Activated CD4-positive, alpha-beta T cell treated with anti-CD3 and anti-CD28 coated beads, Interleukin-2, amount 10 ng/mL, durations not matched to agents 24 days and 14 days (primary cell): ENCODE measurements at regions of chr10 and their contacts with region 1.

Region 1: GRCh38 chr10:9024210-9024609 is 969.7 kb downstream of the GATA3 start:
- DNase-seq: no peak
- H3K4me3 Mint-ChIP-seq: no peak overlapping the region
- H3K27ac Mint-ChIP-seq: peak overlapping the region; percentile 85
- H3K4me1 Mint-ChIP-seq: peaks cover 11% of the 10 kb centered on the region
- H3K27me3 Mint-ChIP-seq: peaks cover 9% of the 10 kb centered on the region

Region 2: DNA sequence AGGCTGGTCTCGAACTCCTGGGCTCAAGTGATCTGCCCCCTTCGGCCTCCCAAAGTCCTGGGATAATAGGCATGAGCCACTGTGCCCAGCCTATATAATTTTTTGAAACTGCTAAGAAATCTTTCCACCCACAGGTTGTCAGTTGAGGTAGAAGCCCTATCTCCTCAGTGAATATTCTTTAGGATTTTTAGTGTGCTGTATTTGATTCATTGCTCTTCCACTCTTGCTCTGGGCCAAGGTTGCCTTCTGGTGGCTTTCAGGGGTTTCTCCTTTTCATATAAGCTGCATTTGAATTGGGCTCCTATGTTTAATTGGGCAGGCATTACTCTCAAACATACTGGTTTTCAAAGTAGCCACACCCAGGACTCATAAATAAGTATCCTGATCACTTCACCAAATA is 38.6 kb before region 1 on chr10:
- intact Hi-C with region 1: loop called (anchors 5 kb)
- DNase-seq: no peak
- H3K4me3 Mint-ChIP-seq: no peak overlapping the region
- H3K27ac Mint-ChIP-seq: no peak overlapping the region
- H3K4me1 Mint-ChIP-seq: peaks cover 5% of the 10 kb centered on the region
- H3K27me3 Mint-ChIP-seq: no peaks in the 10 kb centered on the region

Region 3: GRCh38 chr10:9010093-9010492 is 14.1 kb before region 1 on chr10:
- intact Hi-C with region 1: loop called (anchors 2 kb)
- DNase-seq: peak; percentile 67
- H3K4me3 Mint-ChIP-seq: no peak overlapping the region
- H3K27ac Mint-ChIP-seq: peak overlapping the region; percentile 72
- H3K4me1 Mint-ChIP-seq: peaks cover 21% of the 10 kb centered on the region
- H3K27me3 Mint-ChIP-seq: no peaks in the 10 kb centered on the region